GM10248 (cell line): ENCODE measurements at regions of chr18 and their contacts with region 1.

Region 1: GRCh38 chr18:79242246-79242645 is 153.5 kb upstream of the NFATC1 start:
- DNase-seq: no peak
- CTCF ChIP-seq: no peak

Region 2: GRCh38 chr18:79252904-79253633 is 10.8 kb after region 1 on chr18:
- CTCF ChIA-PET with region 1: interaction called, 15 read pairs
- POLR2A ChIA-PET with region 1: no interaction called
- DNase-seq: no peak
- CTCF ChIP-seq: no peak